Head of caudate nucleus (tissue), 42 donors: ENCODE measurements at regions of chr5 and their contacts with region 1.

Region 1: GRCh38 chr5:178075840-178076548 is 37.3 kb upstream of the N4BP3 start:
- DNase-seq: peak; percentile 39 to 88 (median 71)

Region 2: DNA sequence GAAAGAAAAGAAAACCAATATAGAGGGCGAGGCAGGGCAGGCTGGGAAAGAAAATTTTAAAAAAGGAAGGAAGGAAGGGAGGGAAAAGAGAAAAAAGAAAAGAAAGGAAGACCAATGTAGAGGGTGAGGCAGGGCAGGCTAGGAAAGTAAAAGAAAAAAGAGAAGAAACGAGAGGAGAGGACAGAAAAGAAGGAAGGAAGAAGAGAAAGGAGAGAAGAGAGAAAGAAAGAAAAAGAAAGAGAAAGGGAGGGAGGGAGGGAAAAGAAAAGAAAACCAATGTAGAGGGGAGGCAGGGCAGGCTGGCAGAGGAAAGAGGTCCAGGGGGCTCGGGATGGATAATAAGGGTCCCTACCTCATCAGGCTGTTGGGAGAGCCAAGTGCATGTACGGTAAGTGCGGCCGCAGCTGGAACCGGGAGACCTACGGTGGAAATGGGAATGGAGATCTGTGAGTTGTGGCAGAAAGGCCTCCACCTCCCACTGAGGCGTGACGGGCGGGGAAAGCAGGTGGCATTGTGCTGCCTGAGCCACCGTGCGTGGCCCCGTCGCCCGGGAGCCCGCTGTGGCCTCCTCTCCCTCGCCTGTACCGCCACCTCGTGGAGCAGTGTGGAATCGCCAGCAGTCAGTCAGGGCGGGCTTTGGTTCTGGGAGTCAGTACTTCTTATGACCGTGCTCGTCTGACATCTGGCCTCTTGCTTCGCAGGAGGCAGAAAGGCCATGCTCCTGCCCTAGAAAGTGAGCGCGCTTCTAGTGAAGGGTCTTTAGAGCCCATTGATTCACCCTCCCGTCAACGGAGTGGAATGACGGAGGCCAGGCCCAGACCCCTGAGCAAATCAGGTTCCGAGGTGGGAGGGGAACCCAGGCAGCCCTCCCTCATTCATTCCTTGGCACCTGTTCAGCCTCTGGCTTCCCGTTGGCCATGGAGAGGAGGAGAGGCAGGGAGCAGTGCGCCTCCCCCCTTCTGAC is 88.1 kb after region 1 on chr5:
- intact Hi-C with region 1: loop called (anchors 5 kb)
- DNase-seq: peak; percentile 66 to 94 (median 87)